Activated CD4-positive, alpha-beta memory T cell treated with anti-CD3 and anti-CD28 coated beads, Interleukin-2, amount 10 ng/mL, durations not matched to agents 7 days and 5 days (primary cell): ENCODE measurements at regions of chr2 and their contacts with region 1.

Region 1: DNA sequence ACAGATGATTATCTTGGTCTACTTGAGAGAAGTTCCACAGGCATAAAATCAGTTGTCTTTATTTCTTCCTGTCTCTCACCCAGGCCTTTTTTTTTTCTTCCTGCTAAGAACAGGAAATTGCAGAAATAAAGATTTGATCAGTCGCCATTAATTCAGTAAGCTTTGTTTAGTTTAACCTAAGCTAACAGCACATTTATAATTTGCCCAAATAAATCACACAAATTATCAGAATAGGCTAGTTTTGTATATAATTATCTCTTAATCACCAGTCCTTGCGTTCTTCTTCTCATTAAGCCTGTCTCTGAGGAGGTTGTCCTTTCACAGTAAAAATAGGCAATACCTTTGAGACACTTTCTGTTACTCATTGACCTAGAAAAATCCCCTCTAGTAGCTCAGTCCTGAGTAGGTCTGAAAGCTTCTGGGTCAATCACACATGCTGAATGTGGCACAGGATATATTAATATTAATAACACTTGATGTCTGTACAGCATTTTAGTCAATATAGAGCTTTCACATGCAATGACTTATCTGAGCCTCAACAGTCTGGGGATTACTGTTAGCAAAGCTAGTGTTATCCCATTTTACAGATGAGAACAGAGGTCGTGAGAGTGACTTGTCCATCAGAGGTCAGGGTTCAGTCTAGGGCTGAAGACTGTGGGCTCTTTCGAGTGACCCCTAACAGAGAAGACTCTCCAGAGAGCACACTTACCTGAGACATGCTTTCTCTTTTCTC is 11.2 kb upstream of the STK17B start:
- DNase-seq: no peak
- H3K4me3 Mint-ChIP-seq: peak overlapping the region; percentile 75
- H3K27ac Mint-ChIP-seq: peak overlapping the region; percentile 98
- H3K4me1 Mint-ChIP-seq: peaks cover 83% of the 10 kb centered on the region
- H3K27me3 Mint-ChIP-seq: no peaks in the 10 kb centered on the region

Region 2: DNA sequence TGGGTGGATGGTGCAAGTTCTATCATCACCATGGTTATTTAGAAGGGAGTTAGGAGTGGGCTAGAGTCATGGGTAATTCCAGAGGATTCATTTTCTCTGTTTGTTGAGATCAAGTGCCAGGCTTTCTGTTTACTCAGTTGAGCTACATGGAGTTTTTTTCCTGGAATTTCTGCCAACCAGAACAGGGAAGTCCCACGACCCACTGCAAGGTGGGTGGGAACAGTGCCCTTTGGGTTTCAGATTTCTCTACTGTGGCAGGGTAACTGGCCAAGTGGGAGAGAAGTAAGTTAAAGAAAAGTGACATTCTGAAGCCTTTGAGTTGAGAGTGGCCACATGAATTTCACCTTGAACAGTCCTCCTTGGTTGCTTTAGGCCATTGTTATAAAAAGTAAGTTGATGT is 386.7 kb before region 1 on chr2:
- CTCF ChIA-PET with region 1: no interaction called
- POLR2A ChIA-PET with region 1: no interaction called
- DNase-seq: no peak
- H3K4me3 Mint-ChIP-seq: no peak overlapping the region
- H3K27ac Mint-ChIP-seq: no peak overlapping the region
- H3K4me1 Mint-ChIP-seq: no peaks in the 10 kb centered on the region
- H3K27me3 Mint-ChIP-seq: no peaks in the 10 kb centered on the region

Region 3: DNA sequence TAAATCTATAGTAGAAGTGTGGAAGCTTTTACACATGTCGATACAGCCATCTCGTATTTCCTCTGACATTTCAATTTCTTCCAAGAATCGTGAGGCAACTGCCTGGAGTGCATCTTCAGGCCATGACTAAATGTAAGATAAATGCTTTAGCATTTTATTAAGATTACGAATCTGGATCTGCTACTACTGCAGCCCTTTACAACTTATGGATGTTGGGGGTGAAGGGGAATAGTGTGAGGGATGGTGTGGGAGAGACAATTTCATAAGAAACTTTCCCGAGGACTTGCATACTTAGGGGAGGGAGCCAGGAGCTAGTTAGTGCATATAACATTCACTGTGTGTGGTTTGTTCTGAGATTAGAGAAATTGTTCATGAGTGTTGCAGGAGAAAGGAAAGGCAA is 320.8 kb before region 1 on chr2:
- CTCF ChIA-PET with region 1: no interaction called
- POLR2A ChIA-PET with region 1: no interaction called
- DNase-seq: no peak
- H3K4me3 Mint-ChIP-seq: no peak overlapping the region
- H3K27ac Mint-ChIP-seq: no peak overlapping the region
- H3K4me1 Mint-ChIP-seq: no peaks in the 10 kb centered on the region
- H3K27me3 Mint-ChIP-seq: peaks cover 7% of the 10 kb centered on the region

Region 4: DNA sequence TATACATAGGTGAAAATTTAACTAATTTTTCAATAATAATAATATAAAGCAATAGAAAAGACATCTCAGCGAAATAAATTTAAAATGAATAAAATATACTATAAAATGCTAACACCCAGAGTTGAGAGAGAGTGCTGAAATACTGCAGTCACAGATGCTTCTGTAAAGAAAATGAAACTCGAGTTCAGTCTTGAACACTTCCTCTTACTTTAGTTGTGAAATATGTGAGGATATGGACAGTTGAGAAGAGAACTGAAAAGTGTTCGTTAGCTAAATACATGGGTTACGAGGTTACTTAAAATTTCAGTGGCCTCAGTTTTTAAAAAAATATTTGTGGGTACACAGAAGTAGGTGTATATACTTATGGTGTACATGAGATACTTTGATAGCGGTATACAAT is 220.7 kb before region 1 on chr2:
- CTCF ChIA-PET with region 1: no interaction called
- POLR2A ChIA-PET with region 1: no interaction called
- DNase-seq: no peak
- H3K4me3 Mint-ChIP-seq: no peak overlapping the region
- H3K27ac Mint-ChIP-seq: no peak overlapping the region
- H3K4me1 Mint-ChIP-seq: no peaks in the 10 kb centered on the region
- H3K27me3 Mint-ChIP-seq: peaks cover 3% of the 10 kb centered on the region

Region 5: GRCh38 chr2:196195302-196195701 is 12.7 kb after region 1 on chr2:
- CTCF ChIA-PET with region 1: interaction called, 4 read pairs
- POLR2A ChIA-PET with region 1: interaction called, 88 read pairs
- DNase-seq: no peak
- H3K4me3 Mint-ChIP-seq: peak overlapping the region; percentile 43
- H3K27ac Mint-ChIP-seq: peak overlapping the region; percentile 48
- H3K4me1 Mint-ChIP-seq: peaks cover 54% of the 10 kb centered on the region
- H3K27me3 Mint-ChIP-seq: no peaks in the 10 kb centered on the region

Region 6: GRCh38 chr2:196205881-196206435 is 23.4 kb after region 1 on chr2:
- CTCF ChIA-PET with region 1: interaction called, 6 read pairs
- POLR2A ChIA-PET with region 1: interaction called, 88 read pairs
- DNase-seq: no peak
- H3K4me3 Mint-ChIP-seq: no peak overlapping the region
- H3K27ac Mint-ChIP-seq: no peak overlapping the region
- H3K4me1 Mint-ChIP-seq: peaks cover 41% of the 10 kb centered on the region
- H3K27me3 Mint-ChIP-seq: no peaks in the 10 kb centered on the region

Region 7: DNA sequence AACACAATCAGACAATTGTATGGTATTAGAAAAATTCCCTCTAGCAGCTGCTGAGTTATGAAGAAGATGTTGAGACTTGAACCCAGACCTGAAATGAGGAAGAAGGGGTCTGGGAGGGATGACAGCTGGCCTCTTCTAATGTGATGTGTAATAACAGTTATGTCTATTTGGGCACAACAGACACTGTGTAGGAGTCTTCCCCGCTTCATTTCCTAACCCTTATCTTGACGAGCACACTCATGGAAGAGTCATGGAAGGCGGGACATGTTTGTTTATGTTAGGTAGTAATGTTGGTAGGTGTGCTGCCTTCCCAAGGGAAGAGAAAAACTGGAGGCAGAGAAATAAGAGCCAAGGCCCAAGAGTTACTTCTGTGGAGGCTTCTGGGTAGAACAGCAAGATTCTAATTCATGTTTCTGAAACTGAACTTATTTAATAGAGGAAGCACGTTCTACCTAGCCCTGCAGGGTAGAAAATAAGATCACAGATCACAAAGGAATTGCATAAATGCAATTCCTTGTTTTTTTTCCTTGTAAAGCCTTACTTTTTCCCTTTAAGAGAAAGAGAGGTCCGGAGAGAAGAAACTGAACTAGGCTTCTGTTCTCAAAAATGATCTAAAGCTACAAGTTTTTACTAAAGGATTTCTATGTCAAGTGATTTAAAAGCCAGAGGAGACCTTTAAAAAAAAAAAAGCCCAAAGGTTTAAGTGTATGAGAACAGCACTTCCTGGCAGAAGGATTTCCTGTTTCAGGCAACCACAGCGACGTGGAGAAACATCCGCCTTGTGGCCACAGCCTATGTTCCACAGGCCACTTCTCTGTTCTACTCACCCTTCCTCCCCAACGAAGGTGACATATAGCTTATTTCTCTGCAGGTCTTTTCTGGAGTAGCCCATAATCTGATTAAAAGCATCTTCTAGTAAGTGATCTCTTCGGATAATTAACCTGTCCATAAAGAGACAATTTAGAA is 57.3 kb after region 1 on chr2:
- CTCF ChIA-PET with region 1: interaction called, 8 read pairs
- POLR2A ChIA-PET with region 1: interaction called, 188 read pairs
- DNase-seq: peak; percentile 93
- H3K4me3 Mint-ChIP-seq: peak overlapping the region; percentile 57
- H3K27ac Mint-ChIP-seq: peak overlapping the region; percentile 93
- H3K4me1 Mint-ChIP-seq: peaks cover 74% of the 10 kb centered on the region
- H3K27me3 Mint-ChIP-seq: no peaks in the 10 kb centered on the region